Activated CD8-positive, alpha-beta T cell treated with anti-CD3 and anti-CD28 coated beads, Interleukin-2, amount 10 ng/mL, durations not matched to agents 7 days and 5 days (primary cell): ENCODE measurements at regions of chr17 and their contacts with region 1.

Region 1: GRCh38 chr17:1365445-1366039 is 34.5 kb downstream of the YWHAE start:
- DNase-seq: peak; percentile 78
- ATAC-seq: peak; percentile 59
- H3K4me3 Mint-ChIP-seq: no peak overlapping the region
- H3K27ac Mint-ChIP-seq: no peak overlapping the region
- H3K4me1 Mint-ChIP-seq: peaks cover 60% of the 10 kb centered on the region
- H3K27me3 Mint-ChIP-seq: no peaks in the 10 kb centered on the region

Region 2: GRCh38 chr17:1260086-1260769 is 105.3 kb before region 1 on chr17:
- CTCF ChIA-PET with region 1: interaction called, 17 read pairs
- POLR2A ChIA-PET with region 1: no interaction called
- DNase-seq: no peak
- ATAC-seq: no peak
- H3K4me3 Mint-ChIP-seq: no peak overlapping the region
- H3K27ac Mint-ChIP-seq: no peak overlapping the region
- H3K4me1 Mint-ChIP-seq: peaks cover 44% of the 10 kb centered on the region
- H3K27me3 Mint-ChIP-seq: peaks cover 20% of the 10 kb centered on the region

Region 3: GRCh38 chr17:1347589-1348323 is 17.8 kb before region 1 on chr17:
- CTCF ChIA-PET with region 1: interaction called, 20 read pairs
- POLR2A ChIA-PET with region 1: interaction called, 3 read pairs
- DNase-seq: no peak
- ATAC-seq: no peak
- H3K4me3 Mint-ChIP-seq: no peak overlapping the region
- H3K27ac Mint-ChIP-seq: peak overlapping the region; percentile 69
- H3K4me1 Mint-ChIP-seq: peaks cover 8% of the 10 kb centered on the region
- H3K27me3 Mint-ChIP-seq: no peaks in the 10 kb centered on the region

Region 4: GRCh38 chr17:1390433-1391367 is 25.2 kb after region 1 on chr17:
- CTCF ChIA-PET with region 1: interaction called, 66 read pairs
- POLR2A ChIA-PET with region 1: interaction called, 15 read pairs
- DNase-seq: no peak
- ATAC-seq: no peak
- H3K4me3 Mint-ChIP-seq: no peak overlapping the region
- H3K27ac Mint-ChIP-seq: no peak overlapping the region
- H3K4me1 Mint-ChIP-seq: peaks cover 62% of the 10 kb centered on the region
- H3K27me3 Mint-ChIP-seq: no peaks in the 10 kb centered on the region

Region 5: GRCh38 chr17:1413281-1413791 is 47.8 kb after region 1 on chr17:
- CTCF ChIA-PET with region 1: interaction called, 10 read pairs
- POLR2A ChIA-PET with region 1: no interaction called
- DNase-seq: no peak
- ATAC-seq: no peak
- H3K4me3 Mint-ChIP-seq: no peak overlapping the region
- H3K27ac Mint-ChIP-seq: no peak overlapping the region
- H3K4me1 Mint-ChIP-seq: no peaks in the 10 kb centered on the region
- H3K27me3 Mint-ChIP-seq: no peaks in the 10 kb centered on the region

Region 6: GRCh38 chr17:1434150-1434549 is 68.6 kb after region 1 on chr17:
- CTCF ChIA-PET with region 1: interaction called, 10 read pairs
- POLR2A ChIA-PET with region 1: no interaction called
- DNase-seq: no peak
- ATAC-seq: no peak
- H3K4me3 Mint-ChIP-seq: no peak overlapping the region
- H3K27ac Mint-ChIP-seq: no peak overlapping the region
- H3K4me1 Mint-ChIP-seq: peaks cover 3% of the 10 kb centered on the region
- H3K27me3 Mint-ChIP-seq: no peaks in the 10 kb centered on the region

Region 7: DNA sequence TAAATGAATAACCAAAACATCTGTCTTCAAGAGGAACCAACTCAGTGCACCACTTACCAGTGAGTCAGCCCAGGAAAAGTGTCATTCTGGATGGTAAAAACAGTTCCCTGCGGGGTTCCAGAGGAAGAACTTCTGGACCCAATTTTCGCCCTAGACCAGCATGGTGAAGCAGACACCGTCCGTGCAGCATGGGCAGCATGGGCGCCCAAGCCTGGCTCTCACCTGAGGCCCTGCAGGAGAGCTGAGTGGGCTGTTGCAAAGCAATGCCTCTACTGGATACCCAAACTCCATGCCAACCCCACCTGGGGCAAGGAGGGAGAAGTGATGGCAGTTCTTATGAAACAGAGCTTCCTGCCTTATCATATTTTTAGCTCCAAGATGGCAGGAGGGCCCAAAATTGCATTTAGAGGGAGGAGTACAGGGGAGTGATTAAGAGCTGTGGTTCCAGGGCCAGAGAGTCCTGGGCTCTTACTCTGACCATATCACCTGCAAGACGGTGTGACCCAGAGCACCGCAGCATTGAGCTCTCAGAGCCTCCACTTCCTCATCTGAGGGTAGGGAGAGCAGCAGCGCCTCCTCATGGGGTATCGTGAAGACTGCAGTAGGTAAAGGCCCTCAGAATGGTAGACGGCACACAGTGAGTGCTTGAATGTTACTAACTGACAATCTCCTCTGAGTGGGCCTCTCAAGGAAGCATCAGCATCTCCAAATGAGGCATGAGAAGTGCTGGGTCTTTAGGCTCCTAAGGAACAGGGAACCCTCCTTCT is 167.5 kb after region 1 on chr17:
- CTCF ChIA-PET with region 1: interaction called, 29 read pairs
- POLR2A ChIA-PET with region 1: interaction called, 4 read pairs
- DNase-seq: peak; percentile 53
- ATAC-seq: peak; percentile 61
- H3K4me3 Mint-ChIP-seq: no peak overlapping the region
- H3K27ac Mint-ChIP-seq: no peak overlapping the region
- H3K4me1 Mint-ChIP-seq: no peaks in the 10 kb centered on the region
- H3K27me3 Mint-ChIP-seq: no peaks in the 10 kb centered on the region